Activated naive CD4-positive, alpha-beta T cell treated with anti-CD3 and anti-CD28 coated beads for 36 hours (primary cell): ENCODE measurements at regions of chr6 and their contacts with region 1.

Region 1: DNA sequence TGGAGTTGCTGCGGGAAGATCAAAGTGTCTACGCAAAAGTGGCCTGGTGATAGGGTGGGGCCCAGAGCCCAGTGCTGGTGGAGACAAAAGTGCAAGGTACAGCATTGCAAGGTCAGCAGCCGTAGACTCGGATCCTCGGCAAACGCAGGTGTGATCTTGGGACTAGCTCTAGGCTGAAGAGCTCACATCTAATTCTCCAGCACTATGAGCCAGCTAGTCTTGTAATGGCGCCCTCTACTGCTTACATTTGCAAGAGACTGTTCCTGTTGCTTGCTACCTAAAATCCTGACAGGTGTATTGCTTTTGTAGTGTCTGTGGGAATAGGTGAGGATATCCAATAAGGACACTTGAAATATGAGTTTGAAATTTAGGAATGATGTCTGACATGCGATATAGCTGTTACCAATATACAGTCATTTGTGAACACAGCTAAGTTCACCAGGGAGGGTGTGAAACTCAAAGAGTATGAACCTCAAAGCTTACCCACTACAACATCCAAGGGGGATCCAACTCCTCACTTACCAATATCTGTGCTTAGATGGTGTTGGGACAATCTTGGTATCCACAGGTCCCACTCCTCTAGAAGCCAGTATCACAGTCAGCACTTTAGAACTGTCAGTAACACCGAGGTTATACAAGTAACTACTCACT is 58.4 kb downstream of the PDE7B start:
- DNase-seq: peak; percentile 80
- H3K4me3 Mint-ChIP-seq: no peak overlapping the region
- H3K27ac Mint-ChIP-seq: no peak overlapping the region
- H3K4me1 Mint-ChIP-seq: peaks cover 3% of the 10 kb centered on the region
- H3K27me3 Mint-ChIP-seq: no peaks in the 10 kb centered on the region

Region 2: DNA sequence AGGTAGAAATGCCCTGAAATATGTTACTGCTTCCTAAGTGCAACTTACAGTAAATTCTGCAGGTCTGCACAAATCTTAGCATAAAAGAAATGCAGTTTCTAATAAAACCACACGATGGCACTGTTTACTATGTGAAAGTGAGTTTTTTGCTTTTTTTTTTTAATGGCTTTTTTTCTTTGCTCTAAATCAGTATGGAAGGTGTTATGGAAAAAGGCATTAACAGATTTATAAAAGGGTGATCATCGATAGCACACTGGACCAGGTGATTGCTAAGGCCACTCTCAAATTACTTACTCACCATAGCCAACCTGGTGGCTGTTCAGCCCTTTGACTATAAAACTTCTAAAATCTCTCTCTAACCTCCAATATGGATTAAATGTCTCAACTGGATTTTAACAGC is 458.2 kb before region 1 on chr6:
- CTCF ChIA-PET with region 1: interaction called, 6 read pairs
- intact Hi-C with region 1: loop called (anchors 2 kb)
- DNase-seq: no peak
- H3K4me3 Mint-ChIP-seq: no peak overlapping the region
- H3K27ac Mint-ChIP-seq: no peak overlapping the region
- H3K4me1 Mint-ChIP-seq: no peaks in the 10 kb centered on the region
- H3K27me3 Mint-ChIP-seq: no peaks in the 10 kb centered on the region

Region 3: DNA sequence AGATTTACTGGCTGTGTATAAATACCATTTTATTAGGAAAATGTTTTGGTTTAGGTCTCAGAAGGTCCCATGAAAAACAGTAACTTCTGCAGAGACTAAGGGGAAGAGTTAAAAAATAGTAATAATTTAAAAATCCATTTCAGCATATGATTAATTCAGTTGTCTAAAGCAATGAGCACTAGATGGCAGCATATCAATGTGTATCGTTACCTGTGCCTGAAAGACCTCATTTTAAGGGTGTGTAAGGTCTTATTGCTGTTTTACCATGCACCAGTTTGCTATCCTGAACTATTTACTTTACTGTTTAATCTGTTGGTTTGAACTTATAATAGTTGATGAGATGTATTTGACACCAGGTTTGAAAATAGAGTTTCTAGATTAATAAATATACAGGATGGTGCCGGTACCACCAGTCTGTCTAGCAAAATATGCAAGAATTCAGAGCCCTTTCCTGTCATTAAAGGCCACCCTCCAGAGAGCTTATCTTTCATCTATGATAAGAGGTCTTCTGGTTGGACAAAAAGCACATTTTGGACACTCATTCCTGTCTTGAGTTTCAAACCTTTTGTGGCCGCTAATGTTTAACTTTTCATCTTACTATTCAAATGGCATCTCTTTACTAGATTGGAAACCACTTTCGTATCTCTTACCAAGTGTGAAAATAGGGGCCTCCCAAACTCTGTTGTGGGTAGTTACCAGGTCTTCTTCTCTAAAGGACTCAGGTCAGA is 403.4 kb before region 1 on chr6:
- CTCF ChIA-PET with region 1: no interaction called
- intact Hi-C with region 1: loop called (anchors 1 kb)
- DNase-seq: peak; percentile 12
- H3K4me3 Mint-ChIP-seq: no peak overlapping the region
- H3K27ac Mint-ChIP-seq: no peak overlapping the region
- H3K4me1 Mint-ChIP-seq: peaks cover 2% of the 10 kb centered on the region
- H3K27me3 Mint-ChIP-seq: no peaks in the 10 kb centered on the region

Region 4: DNA sequence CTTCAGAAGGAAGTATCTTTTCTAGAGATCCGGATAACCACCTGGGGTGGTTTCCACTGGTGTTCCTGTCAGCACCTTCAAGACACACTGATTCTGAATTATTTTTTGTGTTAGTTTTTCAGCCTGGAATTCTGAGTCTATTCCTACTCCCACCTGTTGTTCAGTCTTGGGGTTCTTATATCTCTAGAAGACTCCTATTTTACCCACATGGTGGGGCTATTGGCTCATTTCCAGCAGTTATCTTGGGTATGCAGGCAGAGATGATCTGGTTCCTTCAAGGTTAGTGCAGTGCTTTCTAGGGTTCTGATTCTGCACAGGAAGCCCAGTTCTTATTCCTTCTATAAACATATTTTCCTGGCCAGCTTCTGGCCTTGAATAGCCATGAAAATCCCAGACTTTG is 234.0 kb before region 1 on chr6:
- CTCF ChIA-PET with region 1: interaction called, 8 read pairs
- intact Hi-C with region 1: loop called (anchors 1 kb)
- DNase-seq: peak; percentile 58
- H3K4me3 Mint-ChIP-seq: no peak overlapping the region
- H3K27ac Mint-ChIP-seq: no peak overlapping the region
- H3K4me1 Mint-ChIP-seq: peaks cover 10% of the 10 kb centered on the region
- H3K27me3 Mint-ChIP-seq: peaks cover 1% of the 10 kb centered on the region

Region 5: GRCh38 chr6:135851442-135852271 is 58.2 kb before region 1 on chr6 and contains the start of gene PDE7B:
- CTCF ChIA-PET with region 1: interaction called, 14 read pairs
- intact Hi-C with region 1: loop called (anchors 1 kb)
- DNase-seq: peak; percentile 65
- H3K4me3 Mint-ChIP-seq: peak within 1 kb of the TSS; percentile 62
- H3K27ac Mint-ChIP-seq: no peak within 1 kb of the TSS
- H3K4me1 Mint-ChIP-seq: peaks cover 34% of the 10 kb centered on the region
- H3K27me3 Mint-ChIP-seq: no peaks in the 10 kb centered on the region
- total RNA-seq, gene PDE7B: 0.25 to 0.31 TPM

Region 6: GRCh38 chr6:135880066-135880972 is 29.5 kb before region 1 on chr6:
- CTCF ChIA-PET with region 1: interaction called, 6 read pairs
- intact Hi-C with region 1: loop called (anchors 1 kb)
- DNase-seq: peak; percentile 75
- H3K4me3 Mint-ChIP-seq: peak overlapping the region; percentile 77
- H3K27ac Mint-ChIP-seq: peak overlapping the region; percentile 98
- H3K4me1 Mint-ChIP-seq: peaks cover 64% of the 10 kb centered on the region
- H3K27me3 Mint-ChIP-seq: no peaks in the 10 kb centered on the region